ENCODE measurements at regions of chr10 and their contacts with region 1.

Region 1: GRCh38 chr10:71771821-71772617 is 1.3 kb downstream of the VSIR start:
- DNase-seq: peak in 1 of 3 donors; percentile 60
- H3K4me3 ChIP-seq: peak overlapping the region; percentile 93 to 99 (median 98)
- H3K4me3 Mint-ChIP-seq: peak overlapping the region; percentile 97 to 98
- H3K27ac ChIP-seq: peak overlapping the region; percentile 90 to 92
- H3K27ac Mint-ChIP-seq: peak overlapping the region; percentile 96 to 98 (median 98)
- H3K4me1 ChIP-seq: peaks cover 68 to 86% of the 10 kb centered on the region in 2 donors
- H3K4me1 Mint-ChIP-seq: peaks cover 76% of the 10 kb centered on the region
- H3K27me3 ChIP-seq: no peaks in the 10 kb centered on the region
- H3K27me3 Mint-ChIP-seq: peaks cover 0 to 2% (median 0%) of the 10 kb centered on the region in 3 donors
- CTCF ChIP-seq: no peak

Region 2: GRCh38 chr10:71371750-71372166 is 400.3 kb before region 1 on chr10:
- intact Hi-C with region 1: loop called in 1 of 2 experiments (anchors 10 kb)
- DNase-seq: peak; percentile 62 to 77 (median 69)
- H3K4me3 ChIP-seq: peak overlapping the region in 2 of 3 experiments; percentile 4 to 64
- H3K4me3 Mint-ChIP-seq: peak overlapping the region; percentile 31 to 77
- H3K27ac ChIP-seq: peak overlapping the region; percentile 83 to 89
- H3K27ac Mint-ChIP-seq: peak overlapping the region; percentile 85 to 95 (median 93)
- H3K4me1 ChIP-seq: peaks cover 88 to 90% of the 10 kb centered on the region in 2 donors
- H3K4me1 Mint-ChIP-seq: peaks cover 82% of the 10 kb centered on the region
- H3K27me3 ChIP-seq: no peaks in the 10 kb centered on the region
- H3K27me3 Mint-ChIP-seq: no peaks in the 10 kb centered on the region
- CTCF ChIP-seq: no peak

Region 3: GRCh38 chr10:71727738-71728737 is 44.0 kb before region 1 on chr10:
- intact Hi-C with region 1: loop called (anchors 2 to 5 kb)
- DNase-seq: peak; percentile 81 to 92 (median 83)
- H3K4me3 ChIP-seq: peak overlapping the region in 1 of 3 experiments; percentile 54
- H3K4me3 Mint-ChIP-seq: peak overlapping the region; percentile 37 to 82
- H3K27ac ChIP-seq: peak overlapping the region; percentile 90 to 94
- H3K27ac Mint-ChIP-seq: peak overlapping the region; percentile 92 to 99 (median 97)
- H3K4me1 ChIP-seq: peaks cover 70 to 92% of the 10 kb centered on the region in 2 donors
- H3K4me1 Mint-ChIP-seq: peaks cover 93% of the 10 kb centered on the region
- H3K27me3 ChIP-seq: no peaks in the 10 kb centered on the region
- H3K27me3 Mint-ChIP-seq: peaks cover 0 to 2% (median 0%) of the 10 kb centered on the region in 3 donors
- CTCF ChIP-seq: no peak

Region 4: GRCh38 chr10:71753091-71753959 is 18.7 kb before region 1 on chr10:
- intact Hi-C with region 1: loop called (anchors 2 kb)
- DNase-seq: peak; percentile 95 to 98 (median 97)
- H3K4me3 ChIP-seq: peak overlapping the region in 1 of 3 experiments; percentile 64
- H3K4me3 Mint-ChIP-seq: peak overlapping the region; percentile 56 to 81
- H3K27ac ChIP-seq: peak overlapping the region; percentile 82 to 83
- H3K27ac Mint-ChIP-seq: peak overlapping the region; percentile 91 to 96 (median 95)
- H3K4me1 ChIP-seq: peaks cover 100% of the 10 kb centered on the region in 2 donors
- H3K4me1 Mint-ChIP-seq: peaks cover 97% of the 10 kb centered on the region
- H3K27me3 ChIP-seq: no peaks in the 10 kb centered on the region
- H3K27me3 Mint-ChIP-seq: peaks cover 0 to 2% (median 0%) of the 10 kb centered on the region in 3 donors
- CTCF ChIP-seq: no peak

Region 5: DNA sequence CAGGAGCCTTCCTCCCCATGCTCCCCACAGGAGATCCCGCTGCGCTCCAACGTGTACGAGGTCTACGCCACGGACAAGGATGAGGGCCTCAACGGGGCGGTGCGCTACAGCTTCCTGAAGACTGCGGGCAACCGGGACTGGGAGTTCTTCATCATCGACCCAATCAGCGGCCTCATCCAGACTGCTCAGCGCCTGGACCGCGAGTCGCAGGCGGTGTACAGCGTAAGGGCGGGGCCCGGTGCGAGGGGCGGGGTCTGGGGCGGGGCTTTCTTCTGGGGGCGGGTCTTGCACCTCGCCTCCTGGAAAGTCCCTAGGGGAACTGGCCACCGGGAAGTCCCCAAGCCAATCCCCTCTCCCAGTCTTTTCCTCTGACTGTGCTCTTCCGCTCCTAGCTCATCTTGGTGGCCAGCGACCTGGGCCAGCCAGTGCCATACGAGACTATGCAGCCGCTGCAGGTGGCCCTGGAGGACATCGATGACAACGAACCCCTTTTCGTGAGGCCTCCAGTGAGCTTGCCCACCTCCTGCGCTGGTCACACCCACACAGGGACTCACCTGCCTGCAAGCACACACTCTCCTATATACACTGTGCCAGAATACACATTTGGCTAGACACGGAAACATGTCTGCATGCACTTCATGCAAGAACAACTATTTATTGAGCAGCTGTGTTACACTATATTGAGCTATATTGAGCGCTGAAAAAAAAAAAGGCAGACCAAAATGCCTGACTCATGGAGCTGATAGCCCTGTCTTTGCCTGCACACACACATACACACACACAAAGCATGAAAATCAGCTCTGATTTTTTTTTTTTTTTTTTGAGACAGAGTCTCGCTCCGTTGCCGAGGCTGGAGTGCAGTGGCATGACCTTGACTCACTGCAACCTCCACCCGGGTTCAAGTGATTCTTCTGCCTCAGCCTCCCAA is 34.0 kb after region 1 on chr10:
- intact Hi-C with region 1: loop called in 1 of 2 experiments (anchors 5 kb)
- DNase-seq: peak; percentile 67 to 85 (median 72)
- H3K4me3 ChIP-seq: peak overlapping the region in 1 of 3 experiments; percentile 47
- H3K4me3 Mint-ChIP-seq: peak overlapping the region; percentile 27 to 60
- H3K27ac ChIP-seq: peak overlapping the region; percentile 46 to 78
- H3K27ac Mint-ChIP-seq: peak overlapping the region; percentile 70 to 92 (median 83)
- H3K4me1 ChIP-seq: peaks cover 62 to 78% of the 10 kb centered on the region in 2 donors
- H3K4me1 Mint-ChIP-seq: peaks cover 73% of the 10 kb centered on the region
- H3K27me3 ChIP-seq: no peaks in the 10 kb centered on the region
- H3K27me3 Mint-ChIP-seq: peaks cover 0 to 8% (median 0%) of the 10 kb centered on the region in 3 donors
- CTCF ChIP-seq: no peak

Region 6: GRCh38 chr10:71893920-71894319 is 121.9 kb after region 1 on chr10:
- intact Hi-C with region 1: loop called in 1 of 2 experiments (anchors 2 kb)
- DNase-seq: no peak
- H3K4me3 ChIP-seq: no peak overlapping the region
- H3K4me3 Mint-ChIP-seq: no peak overlapping the region
- H3K27ac ChIP-seq: no peak overlapping the region
- H3K27ac Mint-ChIP-seq: peak overlapping the region in 6 of 7 donors; percentile 35 to 100 (median 80)
- H3K4me1 ChIP-seq: peaks cover 77% of the 10 kb centered on the region in 2 donors
- H3K4me1 Mint-ChIP-seq: peaks cover 69% of the 10 kb centered on the region
- H3K27me3 ChIP-seq: no peaks in the 10 kb centered on the region
- H3K27me3 Mint-ChIP-seq: peaks cover 0 to 9% (median 0%) of the 10 kb centered on the region in 3 donors
- CTCF ChIP-seq: no peak

Region 7: DNA sequence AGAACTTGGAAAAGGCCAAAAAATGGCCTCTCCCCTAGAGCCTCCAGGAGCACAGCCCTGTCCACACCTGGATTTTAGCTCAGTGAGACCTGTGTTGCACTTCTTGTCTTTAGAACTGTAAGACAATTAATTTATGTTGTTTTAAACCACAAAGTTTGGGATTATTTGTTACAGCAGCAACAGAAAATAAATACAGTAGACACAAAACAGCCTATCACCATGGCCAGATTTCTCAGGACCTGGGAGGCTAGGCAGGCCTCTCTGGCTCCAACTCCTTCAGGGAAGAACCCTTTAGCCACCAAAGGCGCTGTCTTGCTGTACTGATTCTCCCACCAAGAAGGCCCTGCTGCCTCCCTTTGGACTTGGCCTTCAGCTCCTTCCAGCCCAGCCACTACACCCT is 133.1 kb after region 1 on chr10:
- intact Hi-C with region 1: no loop called
- DNase-seq: no peak
- H3K4me3 ChIP-seq: no peak overlapping the region
- H3K4me3 Mint-ChIP-seq: no peak overlapping the region
- H3K27ac ChIP-seq: no peak overlapping the region
- H3K27ac Mint-ChIP-seq: no peak overlapping the region
- H3K4me1 ChIP-seq: no peaks in the 10 kb centered on the region
- H3K4me1 Mint-ChIP-seq: peaks cover 7% of the 10 kb centered on the region
- H3K27me3 ChIP-seq: no peaks in the 10 kb centered on the region
- H3K27me3 Mint-ChIP-seq: peaks cover 2 to 9% (median 3%) of the 10 kb centered on the region in 3 donors
- CTCF ChIP-seq: no peak

Measured in CD14-positive monocyte (primary cell).